HEK293 (cell line): ENCODE measurements at regions of chr16 and their contacts with region 1.

Region 1: GRCh38 chr16:30557957-30558788 is at the start of gene ZNF764:
- H3K4me3 ChIP-seq: peak within 1 kb of the TSS; percentile 88
- H3K27ac ChIP-seq: peak within 1 kb of the TSS; percentile 98
- H3K4me1 ChIP-seq: peaks cover 2% of the 10 kb centered on the region; the same call in 1 of the 2 replicates
- CTCF ChIP-seq: peak; percentile 84

Region 2: DNA sequence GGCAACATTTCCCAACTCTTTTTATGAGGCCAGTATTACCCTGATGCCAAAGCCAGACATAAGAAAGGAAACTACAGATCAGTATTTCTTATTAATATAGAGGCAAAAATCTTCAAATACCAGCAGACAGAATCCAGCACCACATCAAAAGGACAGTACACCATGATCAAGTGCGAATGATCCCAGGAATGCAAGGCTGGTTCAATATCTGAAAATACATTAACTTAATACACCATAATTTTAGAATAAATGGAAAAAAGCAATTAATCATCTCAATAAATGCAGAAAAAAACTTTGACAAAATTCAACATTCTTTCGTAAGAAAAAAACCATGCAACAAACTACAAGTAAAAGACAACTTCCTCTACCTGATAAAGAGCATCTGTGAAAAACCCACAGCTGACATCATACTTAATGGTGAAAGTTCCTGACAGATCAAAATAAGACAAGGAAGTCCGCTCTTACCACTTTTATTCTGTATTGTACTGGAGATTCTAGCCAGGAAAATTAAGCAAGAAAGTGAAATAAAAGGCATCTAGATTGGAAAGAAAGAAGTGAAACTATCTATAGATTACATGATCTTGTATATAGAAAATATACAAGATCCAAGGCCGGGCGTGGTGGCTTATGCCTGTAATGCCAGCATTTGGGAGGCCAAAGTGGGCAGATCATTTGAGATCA is 408.8 kb before region 1 on chr16:
- CTCF ChIA-PET with region 1: no interaction called
- POLR2A ChIA-PET with region 1: no interaction called
- H3K4me3 ChIP-seq: no peak overlapping the region
- H3K27ac ChIP-seq: no peak overlapping the region
- H3K4me1 ChIP-seq: no peaks in the 10 kb centered on the region
- CTCF ChIP-seq: no peak

Region 3: GRCh38 chr16:30526823-30527635 is 31.1 kb before region 1 on chr16:
- CTCF ChIA-PET with region 1: interaction called, 3 read pairs
- POLR2A ChIA-PET with region 1: interaction called, 25 read pairs
- H3K4me3 ChIP-seq: peak overlapping the region; percentile 82
- H3K27ac ChIP-seq: peak overlapping the region; percentile 92
- H3K4me1 ChIP-seq: peaks cover 9% of the 10 kb centered on the region
- CTCF ChIP-seq: peak; percentile 98

Region 4: DNA sequence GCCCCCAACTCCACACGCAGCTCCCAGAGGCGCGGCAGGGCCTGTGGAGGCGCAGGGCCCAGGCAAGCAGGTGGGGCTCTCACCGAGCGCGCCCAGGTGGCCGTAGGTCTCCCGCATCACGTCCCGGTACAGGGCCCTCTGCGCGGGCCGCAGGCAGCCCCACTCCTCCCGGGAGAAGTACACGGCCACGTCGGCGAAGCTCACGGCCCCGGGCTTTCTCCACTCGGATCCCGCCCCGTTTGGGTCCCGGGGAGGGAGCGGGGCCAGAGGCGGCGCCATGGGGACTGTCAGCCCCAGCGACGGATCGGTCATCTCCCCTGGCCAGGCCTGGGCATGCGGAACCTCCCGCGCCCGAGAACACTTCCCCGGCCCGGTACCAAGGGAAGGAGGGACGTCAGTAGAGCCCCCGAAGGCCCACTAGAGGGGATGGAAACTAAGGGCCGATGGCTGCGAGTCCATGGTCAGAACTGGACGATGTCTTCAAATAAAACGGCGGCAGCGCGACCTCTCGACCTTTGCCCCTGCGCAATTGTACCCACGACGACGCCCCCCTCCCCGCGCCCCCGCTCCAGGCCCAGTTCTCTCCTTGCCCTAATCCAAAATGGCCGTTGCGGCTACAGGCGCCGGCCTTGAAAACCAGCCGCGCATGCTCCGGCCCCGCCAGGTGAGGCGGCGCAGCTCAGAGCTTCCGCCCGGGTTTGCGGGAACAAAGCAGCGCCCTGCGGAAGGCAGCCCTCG is 23.6 kb before region 1 on chr16 and contains the start of gene ZNF747:
- CTCF ChIA-PET with region 1: interaction called, 4 read pairs
- POLR2A ChIA-PET with region 1: interaction called, 69 read pairs
- H3K4me3 ChIP-seq: peak within 1 kb of the TSS; percentile 59
- H3K27ac ChIP-seq: peak within 1 kb of the TSS; percentile 91
- H3K4me1 ChIP-seq: peaks cover 2% of the 10 kb centered on the region; the same call in 1 of the 2 replicates
- CTCF ChIP-seq: peak; percentile 75

Region 5: DNA sequence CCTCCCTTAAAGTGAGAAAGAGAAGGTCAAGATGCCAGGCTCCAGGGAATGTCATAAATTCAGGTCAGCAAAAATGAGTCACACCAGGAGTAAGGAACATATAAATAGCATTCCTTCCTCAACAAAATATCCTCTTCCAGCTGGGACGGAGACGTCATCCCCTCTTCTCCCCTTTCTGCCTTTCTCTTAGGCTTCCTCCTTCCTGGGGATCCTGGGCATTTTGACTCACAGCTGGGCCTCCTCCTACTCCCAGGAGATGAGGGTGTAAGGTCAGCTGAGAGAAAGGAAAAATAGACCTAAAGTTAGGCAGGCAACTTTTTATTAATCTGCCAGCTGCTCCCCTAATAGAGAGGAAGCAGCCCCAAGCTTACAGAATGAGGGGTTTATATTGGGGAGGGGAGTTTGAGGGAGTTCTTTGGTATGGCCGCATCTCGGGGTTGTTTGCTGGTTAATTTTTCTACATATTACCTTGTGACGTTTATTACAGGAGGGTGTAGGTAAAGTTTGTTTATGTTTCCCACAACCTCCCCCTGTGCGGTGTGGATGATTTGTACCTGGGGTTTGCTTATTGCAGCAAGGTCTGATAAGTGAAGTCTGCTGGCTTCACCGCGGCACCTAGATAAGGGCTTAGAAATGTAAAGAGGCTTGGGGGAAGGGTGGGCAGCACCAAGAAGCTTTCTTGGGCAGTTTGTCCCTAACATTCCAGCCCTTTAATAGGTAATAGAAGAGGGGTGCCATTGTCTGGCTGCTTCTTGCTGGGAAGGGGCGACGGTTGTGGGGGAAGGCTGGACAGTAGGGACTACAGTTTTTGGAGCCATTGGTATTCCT is 16.5 kb before region 1 on chr16:
- CTCF ChIA-PET with region 1: interaction called, 3 read pairs
- POLR2A ChIA-PET with region 1: interaction called, 69 read pairs
- H3K4me3 ChIP-seq: no peak overlapping the region
- H3K27ac ChIP-seq: no peak overlapping the region
- H3K4me1 ChIP-seq: peaks cover 6% of the 10 kb centered on the region; the same call in 1 of the 2 replicates
- CTCF ChIP-seq: no peak

Region 6: GRCh38 chr16:30602616-30603277 is 44.6 kb after region 1 on chr16:
- CTCF ChIA-PET with region 1: interaction called, 6 read pairs
- POLR2A ChIA-PET with region 1: interaction called, 15 read pairs
- H3K4me3 ChIP-seq: no peak overlapping the region
- H3K27ac ChIP-seq: no peak overlapping the region
- H3K4me1 ChIP-seq: no peaks in the 10 kb centered on the region
- CTCF ChIP-seq: no peak

Region 7: DNA sequence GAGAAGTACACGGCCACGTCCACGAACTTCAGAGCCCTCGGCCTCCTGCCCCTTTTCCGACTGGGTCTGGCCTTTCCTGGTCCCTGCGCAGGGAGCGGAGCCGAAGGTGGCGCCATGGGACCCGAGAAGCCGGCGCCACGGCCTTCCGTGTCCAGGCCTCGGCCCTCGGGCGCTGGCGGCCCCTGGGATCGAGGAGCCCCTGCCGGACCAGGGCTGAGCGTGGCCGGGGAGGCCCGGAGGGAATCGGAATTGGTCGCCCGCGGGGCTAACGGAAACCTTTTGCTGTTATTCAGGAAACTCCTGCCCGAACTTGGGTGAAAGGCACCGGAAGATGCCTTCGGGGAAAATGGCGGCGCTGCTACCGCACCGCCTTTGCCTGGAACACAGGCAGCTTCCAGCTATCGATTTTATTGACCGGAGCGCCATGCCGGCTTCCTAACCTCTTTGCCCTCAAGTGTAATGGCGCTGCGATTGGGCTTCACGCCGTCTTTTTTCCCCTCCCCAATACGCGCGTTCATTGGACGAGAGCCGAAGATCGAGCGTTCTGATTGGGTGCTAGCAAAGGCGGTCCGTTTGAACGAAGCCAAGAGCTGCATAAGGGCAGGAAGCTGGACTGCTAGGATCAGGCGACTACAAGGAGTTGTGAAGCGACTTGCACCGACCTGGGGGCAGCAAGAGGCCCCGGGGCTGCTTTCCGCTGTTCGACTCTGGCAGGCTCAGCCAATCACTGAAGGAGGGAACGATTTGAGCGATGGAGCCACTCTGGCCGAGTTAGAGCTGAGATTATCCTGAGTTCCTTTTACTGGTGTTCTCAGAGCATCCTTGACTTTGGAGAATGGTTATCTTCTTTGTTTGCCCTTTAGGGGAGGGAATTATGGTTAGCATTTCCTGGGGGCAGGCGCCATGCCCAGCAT is 52.0 kb after region 1 on chr16 and contains the start of gene ZNF689:
- CTCF ChIA-PET with region 1: interaction called, 4 read pairs
- POLR2A ChIA-PET with region 1: interaction called, 12 read pairs
- H3K4me3 ChIP-seq: peak within 1 kb of the TSS; percentile 81
- H3K27ac ChIP-seq: peak within 1 kb of the TSS; percentile 96
- H3K4me1 ChIP-seq: no peaks in the 10 kb centered on the region
- CTCF ChIP-seq: peak; percentile 78

Region 8: GRCh38 chr16:30669896-30670797 is 112.0 kb after region 1 on chr16:
- CTCF ChIA-PET with region 1: no interaction called
- POLR2A ChIA-PET with region 1: no interaction called
- H3K4me3 ChIP-seq: no peak overlapping the region
- H3K27ac ChIP-seq: no peak overlapping the region
- H3K4me1 ChIP-seq: no peaks in the 10 kb centered on the region
- CTCF ChIP-seq: no peak

Region 9: GRCh38 chr16:30844671-30845449 is 286.7 kb after region 1 on chr16:
- CTCF ChIA-PET with region 1: no interaction called
- POLR2A ChIA-PET with region 1: no interaction called
- H3K4me3 ChIP-seq: no peak overlapping the region
- H3K27ac ChIP-seq: no peak overlapping the region
- H3K4me1 ChIP-seq: no peaks in the 10 kb centered on the region
- CTCF ChIP-seq: peak; percentile 91